ENCODE measurements at regions of chr17 and their contacts with region 1.

Region 1: GRCh38 chr17:8572764-8573163 is 57.8 kb downstream of the MYH10 start:
- DNase-seq: no peak

Region 2: DNA sequence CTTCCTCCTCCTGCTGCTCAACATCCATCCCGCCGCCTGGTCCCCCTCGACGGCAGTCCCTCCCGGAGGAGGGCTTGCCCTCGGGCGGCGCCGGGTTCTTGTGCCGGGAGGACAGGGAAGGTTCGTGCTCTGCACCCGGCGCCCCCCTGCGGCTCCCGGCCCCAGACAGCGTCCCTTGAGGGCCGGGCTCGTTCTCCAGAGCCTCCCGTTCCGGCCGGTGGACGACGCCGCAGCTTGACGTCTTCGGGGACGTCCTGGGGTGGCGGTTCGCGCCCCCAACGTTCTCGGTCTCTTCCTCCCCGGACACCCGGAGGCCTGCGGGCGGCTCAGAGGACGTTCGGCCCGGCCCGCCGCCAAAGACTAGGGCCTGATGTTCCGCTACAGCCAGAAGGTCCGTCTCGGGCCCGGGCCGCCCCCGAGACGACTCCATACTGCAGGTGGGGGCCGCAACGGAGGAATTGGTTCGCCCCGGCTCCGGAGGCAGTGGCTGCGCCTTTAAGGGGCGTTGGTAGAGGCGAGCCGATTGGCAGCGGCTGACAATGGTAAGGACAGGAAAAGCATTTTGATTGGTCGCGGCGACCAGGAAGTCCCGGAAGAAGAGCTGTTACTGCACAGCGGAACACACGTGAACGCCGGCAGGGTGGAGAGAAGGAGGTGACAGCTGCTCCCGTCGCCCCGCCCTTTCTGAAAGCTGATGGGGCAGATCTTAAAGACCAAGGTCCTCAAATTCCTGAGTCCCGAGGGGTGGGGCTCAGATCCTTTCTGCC is 382.9 kb before region 1 on chr17 and contains the start of gene BORCS6:
- intact Hi-C with region 1: no loop called
- DNase-seq: peak; percentile 99
- total RNA-seq, gene BORCS6: 4.5 to 5.6 TPM

Region 3: DNA sequence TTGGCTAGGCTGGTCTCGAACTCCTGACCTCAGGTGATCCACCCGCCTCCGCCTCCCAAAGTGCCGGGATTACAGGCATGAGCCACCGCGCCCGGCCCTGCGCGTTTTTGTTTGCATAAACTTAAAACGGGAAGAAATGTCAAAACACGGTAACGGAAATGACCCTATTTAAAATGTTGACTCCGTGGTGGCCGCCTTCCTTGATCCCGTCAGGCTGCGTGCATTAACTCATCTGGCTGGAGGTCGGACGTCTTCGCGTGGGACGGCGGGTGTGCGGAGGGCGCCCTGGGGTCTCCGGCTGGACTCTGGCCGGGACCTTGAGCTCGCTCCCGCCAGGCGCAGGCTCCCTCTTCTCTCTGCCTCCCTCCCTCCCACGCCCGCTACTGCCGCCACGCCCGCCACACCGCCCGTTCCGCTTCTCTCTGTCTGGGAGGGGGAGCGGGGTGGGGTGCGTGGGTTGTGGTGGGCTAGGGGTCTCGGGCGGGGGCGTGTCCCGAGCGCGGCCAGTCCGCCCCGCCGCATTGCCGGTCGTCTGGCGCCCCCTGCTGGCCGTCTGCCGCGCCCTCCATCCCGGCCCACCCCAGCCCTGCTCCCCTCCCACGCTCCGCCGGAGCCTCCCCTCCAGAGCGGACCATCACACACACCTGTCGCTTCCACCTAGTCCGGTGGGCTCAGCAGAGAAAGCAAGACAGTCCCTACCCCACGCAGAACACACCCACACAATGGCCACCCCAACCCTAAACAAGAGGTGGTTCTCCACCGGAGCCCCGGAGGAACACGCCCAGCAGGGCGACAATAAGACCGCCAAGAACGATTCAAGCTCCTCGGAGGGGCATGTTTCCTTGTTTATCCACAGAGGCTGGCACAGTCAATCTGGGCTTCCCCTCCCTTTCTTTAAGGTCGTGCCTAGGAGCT is 173.1 kb after region 1 on chr17:
- intact Hi-C with region 1: loop called (anchors 2 to 10 kb)
- DNase-seq: peak; percentile 92